Naive thymus-derived CD4-positive, alpha-beta T cell (primary cell): ENCODE measurements at regions of chr3 and their contacts with region 1.

Region 1: DNA sequence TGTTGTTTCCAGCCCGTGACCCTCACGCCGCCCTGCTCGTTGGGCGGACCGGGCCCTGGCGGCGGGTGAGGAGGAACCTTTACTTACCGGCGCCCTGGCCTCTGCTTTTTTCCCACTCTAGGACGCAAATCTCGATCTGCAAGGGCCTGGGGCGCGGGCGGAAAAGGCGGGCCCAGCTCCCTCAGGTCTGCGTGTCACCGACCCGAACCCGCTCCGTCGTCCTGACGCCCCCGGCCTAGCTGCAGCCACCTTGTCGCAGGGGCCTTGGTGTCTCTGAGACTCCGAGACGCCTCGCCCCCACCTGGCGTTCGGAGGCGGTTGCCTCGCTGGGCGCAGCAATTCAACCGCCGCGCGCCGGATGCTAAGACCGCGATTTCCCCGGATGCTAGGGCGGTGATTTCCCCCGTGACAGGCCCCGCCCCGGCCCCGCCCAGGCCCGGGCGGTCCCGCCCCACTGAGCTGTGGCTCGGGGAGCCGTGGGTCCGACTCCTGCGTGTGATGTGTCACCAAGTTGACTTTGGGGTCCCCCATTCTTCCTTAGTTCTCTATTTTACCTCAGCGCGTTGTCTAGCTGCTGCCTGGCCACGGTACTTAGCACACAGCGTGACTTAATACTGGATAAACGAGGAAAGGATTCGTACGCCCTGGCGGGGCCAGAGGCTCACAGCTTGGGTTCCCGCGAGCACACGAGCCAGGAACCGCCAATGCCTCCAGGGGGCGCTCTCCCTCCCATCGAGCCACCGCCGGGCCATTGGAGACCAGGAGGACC is at the start of gene RPL39L:
- DNase-seq: peak; percentile 87 to 95 (median 92)
- ATAC-seq: peak; percentile 97
- H3K4me3 ChIP-seq: peak within 1 kb of the TSS; percentile 94
- H3K4me3 Mint-ChIP-seq: peak within 1 kb of the TSS; percentile 80 to 94 (median 89)
- H3K27ac ChIP-seq: peak within 1 kb of the TSS; percentile 76
- H3K27ac Mint-ChIP-seq: peak within 1 kb of the TSS; percentile 86 to 98 (median 94)
- H3K4me1 ChIP-seq: peaks cover 9 to 17% of the 10 kb centered on the region in 2 donors
- H3K4me1 Mint-ChIP-seq: peaks cover 6 to 26% (median 17%) of the 10 kb centered on the region in 7 donors
- H3K27me3 ChIP-seq: no peaks in the 10 kb centered on the region
- H3K27me3 Mint-ChIP-seq: peaks cover 0 to 2% (median 0%) of the 10 kb centered on the region in 5 donors
- total RNA-seq, gene RPL39L: 0.81 to 14.0 (median 2.8) TPM in 4 of 5 experiments, not detected in the other

Region 2: DNA sequence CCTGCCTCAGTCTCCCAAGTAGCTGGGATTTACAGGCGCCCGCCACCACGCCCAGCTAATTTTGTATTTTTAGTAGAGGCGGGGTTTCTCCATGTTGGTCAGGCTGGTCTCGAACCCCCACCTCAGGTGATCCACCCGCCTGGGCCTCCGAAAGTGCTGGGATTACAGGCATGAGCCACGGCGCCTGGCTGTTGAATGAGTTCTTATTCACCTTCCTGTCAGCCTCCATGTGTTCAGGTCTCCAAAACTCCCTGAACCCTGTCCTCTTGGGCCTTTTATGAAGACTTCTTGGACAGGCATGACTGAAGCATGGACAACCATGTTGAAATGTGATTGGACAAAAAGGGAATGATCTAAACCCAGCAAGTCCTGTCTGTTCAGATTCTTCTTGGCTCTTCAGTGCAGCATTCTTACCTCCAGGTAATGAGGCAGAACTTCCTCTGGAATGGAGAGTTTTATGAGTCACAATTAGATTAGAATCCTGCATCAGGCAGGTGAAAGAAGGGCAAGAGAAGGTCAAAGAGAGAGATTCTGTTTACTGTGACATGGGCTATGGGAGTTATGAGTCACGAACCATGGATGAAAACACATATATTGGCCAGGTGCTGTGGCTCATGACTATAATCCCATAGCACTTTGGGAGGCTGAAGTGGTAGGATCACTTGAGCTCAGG is 379.0 kb before region 1 on chr3:
- CTCF ChIA-PET with region 1: interaction called, 12 read pairs
- POLR2A ChIA-PET with region 1: no interaction called
- intact Hi-C with region 1: no loop called
- DNase-seq: no peak
- ATAC-seq: no peak
- H3K4me3 ChIP-seq: no peak overlapping the region
- H3K4me3 Mint-ChIP-seq: no peak overlapping the region
- H3K27ac ChIP-seq: no peak overlapping the region
- H3K27ac Mint-ChIP-seq: no peak overlapping the region
- H3K4me1 ChIP-seq: no peaks in the 10 kb centered on the region
- H3K4me1 Mint-ChIP-seq: peaks cover 0 to 3% (median 0%) of the 10 kb centered on the region in 7 donors
- H3K27me3 ChIP-seq: no peaks in the 10 kb centered on the region
- H3K27me3 Mint-ChIP-seq: peaks cover 0 to 10% (median 0%) of the 10 kb centered on the region in 5 donors

Region 3: DNA sequence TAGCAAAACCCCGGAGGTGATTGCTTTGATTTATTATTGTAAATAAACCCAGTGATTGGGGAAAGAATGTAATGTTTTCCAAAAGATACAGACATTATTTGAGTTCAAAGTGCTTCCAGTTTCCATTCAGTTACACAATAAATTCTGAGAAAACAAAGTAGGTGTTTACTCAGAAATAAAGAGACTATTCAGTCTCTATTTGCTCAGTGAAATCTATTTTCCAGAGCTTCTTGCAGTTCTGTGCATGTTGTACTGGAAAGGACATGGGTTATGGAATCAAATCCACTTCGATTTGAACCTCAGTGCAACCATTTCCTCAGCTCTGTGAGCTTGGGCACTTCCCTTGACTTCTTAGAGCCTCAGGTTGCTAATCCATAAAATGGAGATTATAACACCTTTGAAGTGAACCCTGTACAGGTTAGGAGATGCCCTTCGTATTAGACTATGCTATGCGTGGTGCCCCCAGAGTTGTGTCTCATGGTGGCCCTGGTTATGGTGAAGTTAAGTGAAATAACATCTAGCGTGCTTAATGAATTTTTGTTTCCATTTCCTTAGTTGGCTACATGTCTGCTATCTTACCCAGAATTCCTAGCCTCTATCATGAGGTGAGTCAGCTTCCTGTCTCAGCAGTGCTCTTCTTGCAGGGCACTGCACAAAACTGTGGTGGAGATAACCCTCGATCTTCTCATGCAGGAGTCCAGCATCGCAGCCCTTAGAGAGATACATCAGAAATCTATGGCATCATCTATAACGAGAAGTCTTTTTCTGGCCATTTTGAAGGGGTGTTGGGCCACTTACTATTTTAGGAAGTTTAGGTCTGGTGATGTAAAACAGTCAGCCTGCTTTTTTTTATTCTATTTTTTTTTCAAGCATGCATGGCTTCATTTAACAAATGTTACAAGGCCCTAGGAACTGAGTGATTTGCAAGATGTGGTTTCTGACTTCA is 97.7 kb before region 1 on chr3:
- CTCF ChIA-PET with region 1: interaction called, 5 read pairs
- POLR2A ChIA-PET with region 1: no interaction called
- intact Hi-C with region 1: loop called (anchors 2 to 5 kb)
- DNase-seq: peak in 8 of 9 donors; percentile 38 to 77 (median 61)
- ATAC-seq: peak; percentile 93
- H3K4me3 ChIP-seq: peak overlapping the region; percentile 12
- H3K4me3 Mint-ChIP-seq: peak overlapping the region; percentile 56 to 88 (median 80)
- H3K27ac ChIP-seq: peak overlapping the region; percentile 67
- H3K27ac Mint-ChIP-seq: peak overlapping the region; percentile 93 to 99 (median 96)
- H3K4me1 ChIP-seq: peaks cover 41 to 79% of the 10 kb centered on the region in 2 donors
- H3K4me1 Mint-ChIP-seq: peaks cover 59 to 95% (median 84%) of the 10 kb centered on the region in 7 donors
- H3K27me3 ChIP-seq: no peaks in the 10 kb centered on the region
- H3K27me3 Mint-ChIP-seq: no peaks in the 10 kb centered on the region

Region 4: GRCh38 chr3:187125319-187126031 is 13.8 kb before region 1 on chr3:
- CTCF ChIA-PET with region 1: interaction called, 21 read pairs
- POLR2A ChIA-PET with region 1: interaction called, 46 read pairs
- intact Hi-C with region 1: loop called (anchors 1 kb)
- DNase-seq: no peak
- ATAC-seq: no peak
- H3K4me3 ChIP-seq: no peak overlapping the region
- H3K4me3 Mint-ChIP-seq: no peak overlapping the region
- H3K27ac ChIP-seq: no peak overlapping the region
- H3K27ac Mint-ChIP-seq: no peak overlapping the region
- H3K4me1 ChIP-seq: peaks cover 10 to 12% of the 10 kb centered on the region in 2 donors
- H3K4me1 Mint-ChIP-seq: peaks cover 4 to 25% (median 17%) of the 10 kb centered on the region in 7 donors
- H3K27me3 ChIP-seq: no peaks in the 10 kb centered on the region
- H3K27me3 Mint-ChIP-seq: no peaks in the 10 kb centered on the region

Region 5: DNA sequence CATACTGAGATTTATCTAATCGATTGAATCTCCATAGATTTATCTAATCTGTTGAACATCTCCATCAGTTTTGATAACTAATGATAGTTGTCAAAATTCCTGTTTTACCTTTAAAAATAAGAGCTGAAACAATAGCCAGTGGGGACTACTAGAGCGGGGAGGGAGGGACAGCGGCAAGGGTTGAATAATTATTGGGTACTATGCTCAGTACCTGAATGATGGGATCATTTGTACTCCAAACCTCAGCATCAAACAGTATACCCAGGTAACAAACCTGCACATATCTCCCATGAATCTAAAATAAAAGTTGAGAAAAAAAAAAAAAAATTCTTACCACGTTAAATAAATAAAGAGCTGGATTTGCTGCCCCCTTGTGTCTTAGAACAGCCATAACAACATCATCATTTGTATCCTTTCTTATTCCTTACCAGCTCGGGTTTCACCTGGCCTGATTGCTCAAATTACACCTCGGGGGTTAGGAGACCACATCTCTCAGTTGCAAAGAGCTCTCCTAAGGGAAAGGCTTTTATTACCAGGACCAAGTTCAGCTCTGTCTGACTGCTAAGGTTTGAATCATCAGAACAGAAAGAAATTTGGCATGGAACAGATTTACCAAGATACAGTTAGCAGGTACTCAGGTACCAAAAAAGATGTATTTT is 25.7 kb after region 1 on chr3:
- CTCF ChIA-PET with region 1: interaction called, 21 read pairs
- POLR2A ChIA-PET with region 1: interaction called, 6 read pairs
- intact Hi-C with region 1: loop called in 1 of 2 experiments (anchors 1 kb)
- DNase-seq: peak in 7 of 9 donors; percentile 53 to 78 (median 72)
- ATAC-seq: peak; percentile 86
- H3K4me3 ChIP-seq: no peak overlapping the region
- H3K4me3 Mint-ChIP-seq: no peak overlapping the region
- H3K27ac ChIP-seq: no peak overlapping the region
- H3K27ac Mint-ChIP-seq: peak overlapping the region in 1 of 9 donors; percentile 21
- H3K4me1 ChIP-seq: peaks cover 0 to 5% of the 10 kb centered on the region in 2 donors
- H3K4me1 Mint-ChIP-seq: peaks cover 3 to 15% (median 7%) of the 10 kb centered on the region in 7 donors
- H3K27me3 ChIP-seq: no peaks in the 10 kb centered on the region
- H3K27me3 Mint-ChIP-seq: peaks cover 0 to 39% (median 4%) of the 10 kb centered on the region in 5 donors